CD4-positive, alpha-beta T cell (primary cell): ENCODE measurements at regions of chr11 and their contacts with region 1.

Region 1: DNA sequence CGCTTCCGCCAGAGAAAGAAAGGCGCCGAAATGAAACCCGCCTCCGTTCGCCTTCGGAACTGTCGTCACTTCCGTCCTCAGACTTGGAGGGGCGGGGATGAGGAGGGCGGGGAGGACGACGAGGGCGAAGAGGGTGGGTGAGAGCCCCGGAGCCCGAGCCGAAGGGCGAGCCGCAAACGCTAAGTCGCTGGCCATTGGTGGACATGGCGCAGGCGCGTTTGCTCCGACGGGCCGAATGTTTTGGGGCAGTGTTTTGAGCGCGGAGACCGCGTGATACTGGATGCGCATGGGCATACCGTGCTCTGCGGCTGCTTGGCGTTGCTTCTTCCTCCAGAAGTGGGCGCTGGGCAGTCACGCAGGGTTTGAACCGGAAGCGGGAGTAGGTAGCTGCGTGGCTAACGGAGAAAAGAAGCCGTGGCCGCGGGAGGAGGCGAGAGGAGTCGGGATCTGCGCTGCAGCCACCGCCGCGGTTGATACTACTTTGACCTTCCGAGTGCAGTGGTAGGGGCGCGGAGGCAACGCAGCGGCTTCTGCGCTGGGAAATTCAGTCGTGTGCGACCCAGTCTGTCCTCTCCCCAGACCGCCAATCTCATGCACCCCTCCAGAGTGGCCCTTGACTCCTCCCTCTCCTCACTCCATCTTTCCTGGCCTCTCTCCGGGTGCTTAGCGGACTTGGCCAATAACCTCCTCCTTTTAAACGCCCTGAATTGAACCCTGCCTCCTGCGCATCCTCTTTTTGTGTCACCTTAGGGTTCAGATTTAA is at the start of gene ATM:
- DNase-seq: peak; percentile 97 to 100 (median 98)
- ATAC-seq: peak; percentile 73
- H3K4me3 ChIP-seq: peak within 1 kb of the TSS; percentile 75
- H3K4me3 Mint-ChIP-seq: no peak within 1 kb of the TSS
- H3K27ac ChIP-seq: peak within 1 kb of the TSS; percentile 95 to 99
- H3K27ac Mint-ChIP-seq: no peak within 1 kb of the TSS
- H3K4me1 ChIP-seq: peaks cover 23% of the 10 kb centered on the region
- H3K4me1 Mint-ChIP-seq: peaks cover 50% of the 10 kb centered on the region
- H3K27me3 ChIP-seq: no peaks in the 10 kb centered on the region
- H3K27me3 Mint-ChIP-seq: no peaks in the 10 kb centered on the region
- CTCF ChIP-seq: peak; percentile 82
- total RNA-seq, gene ATM: 307 to 329 TPM

Region 2: DNA sequence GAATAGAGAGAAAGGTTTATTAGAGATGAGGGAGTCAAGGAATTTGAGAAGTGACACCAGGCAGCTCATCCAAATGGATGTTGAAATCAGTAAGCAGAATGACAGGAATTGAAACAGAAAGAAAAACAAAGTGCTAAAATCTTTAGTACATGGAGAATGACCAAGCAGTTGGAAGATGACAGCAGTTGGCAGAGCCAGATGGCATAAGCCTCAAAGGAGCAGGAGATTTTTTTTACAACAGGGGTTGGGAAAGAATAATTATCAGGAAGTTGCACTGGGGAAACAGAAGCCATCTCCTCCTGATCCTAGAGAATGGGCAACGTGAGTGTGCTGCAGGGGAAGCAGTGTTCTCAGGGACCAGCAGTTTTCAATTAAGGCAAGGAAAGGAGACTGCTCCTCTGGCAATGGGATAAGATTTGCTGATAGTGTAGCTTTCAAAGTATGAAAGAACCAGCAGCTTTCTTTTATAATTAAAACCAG is 265.7 kb before region 1 on chr11:
- CTCF ChIA-PET with region 1: no interaction called
- POLR2A ChIA-PET with region 1: no interaction called
- intact Hi-C with region 1: no loop called
- DNase-seq: peak in 3 of 14 experiments; percentile 11 to 13 (median 12)
- ATAC-seq: no peak
- H3K4me3 ChIP-seq: no peak overlapping the region
- H3K4me3 Mint-ChIP-seq: no peak overlapping the region
- H3K27ac ChIP-seq: no peak overlapping the region
- H3K27ac Mint-ChIP-seq: no peak overlapping the region
- H3K4me1 ChIP-seq: no peaks in the 10 kb centered on the region
- H3K4me1 Mint-ChIP-seq: no peaks in the 10 kb centered on the region
- H3K27me3 ChIP-seq: peaks cover 0 to 5% of the 10 kb centered on the region in 2 experiments
- H3K27me3 Mint-ChIP-seq: peaks cover 30% of the 10 kb centered on the region
- CTCF ChIP-seq: no peak

Region 3: DNA sequence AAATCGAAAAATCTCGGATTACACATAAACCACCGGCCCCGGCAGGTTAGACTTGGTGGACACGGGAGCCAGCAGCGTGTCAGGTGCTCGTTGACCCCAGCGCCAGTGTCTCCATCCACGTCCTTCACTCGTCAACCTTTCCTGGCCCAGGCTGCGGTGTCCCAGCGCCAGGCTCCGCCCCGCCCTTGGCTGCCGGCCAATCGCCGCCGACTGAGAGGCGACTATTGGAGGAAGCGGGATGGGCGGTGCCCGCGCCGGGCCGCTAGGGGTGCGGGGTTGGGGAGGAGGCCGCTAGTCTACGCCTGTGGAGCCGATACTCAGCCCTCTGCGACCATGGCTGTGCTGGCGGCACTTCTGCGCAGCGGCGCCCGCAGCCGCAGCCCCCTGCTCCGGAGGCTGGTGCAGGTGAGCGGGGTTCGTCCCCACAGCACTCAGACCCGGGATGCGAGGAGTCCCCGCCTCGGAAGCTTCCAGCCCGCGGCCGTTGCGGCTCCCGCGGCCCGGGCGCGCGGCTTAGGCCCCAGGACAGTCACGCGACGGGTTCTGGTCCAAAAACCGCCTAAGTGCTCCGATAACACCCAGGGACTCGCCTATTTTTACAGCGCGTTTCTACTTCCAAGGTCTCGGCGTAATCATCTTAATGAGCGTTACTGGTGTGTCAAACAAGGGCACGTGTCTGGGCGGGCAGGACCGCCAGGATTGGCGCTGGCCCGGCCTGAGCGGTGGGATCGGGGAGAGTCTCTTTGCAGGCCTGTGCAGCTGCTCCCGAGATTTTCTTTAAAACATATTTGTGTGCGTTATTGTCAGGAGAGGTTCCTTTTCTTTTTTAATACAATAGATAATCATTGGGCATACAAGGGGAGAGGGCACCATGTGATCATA is 101.4 kb before region 1 on chr11 and contains the start of gene ACAT1:
- CTCF ChIA-PET with region 1: no interaction called
- POLR2A ChIA-PET with region 1: interaction called, 5 read pairs
- intact Hi-C with region 1: loop called in 1 of 2 experiments (anchors 2 kb)
- DNase-seq: peak; percentile 91 to 98 (median 96)
- ATAC-seq: peak; percentile 98
- H3K4me3 ChIP-seq: peak within 1 kb of the TSS; percentile 84
- H3K4me3 Mint-ChIP-seq: peak within 1 kb of the TSS; percentile 89
- H3K27ac ChIP-seq: peak within 1 kb of the TSS in 1 of 2 donors; percentile 46
- H3K27ac Mint-ChIP-seq: peak within 1 kb of the TSS; percentile 53
- H3K4me1 ChIP-seq: peaks cover 40% of the 10 kb centered on the region
- H3K4me1 Mint-ChIP-seq: peaks cover 42% of the 10 kb centered on the region
- H3K27me3 ChIP-seq: no peaks in the 10 kb centered on the region
- H3K27me3 Mint-ChIP-seq: no peaks in the 10 kb centered on the region
- CTCF ChIP-seq: no peak
- total RNA-seq, gene ACAT1: 13.8 to 18.5 TPM

Region 4: GRCh38 chr11:108206969-108207682 is 15.7 kb before region 1 on chr11:
- CTCF ChIA-PET with region 1: no interaction called
- POLR2A ChIA-PET with region 1: interaction called, 10 read pairs
- intact Hi-C with region 1: no loop called
- DNase-seq: no peak
- ATAC-seq: no peak
- H3K4me3 ChIP-seq: no peak overlapping the region
- H3K4me3 Mint-ChIP-seq: no peak overlapping the region
- H3K27ac ChIP-seq: no peak overlapping the region
- H3K27ac Mint-ChIP-seq: no peak overlapping the region
- H3K4me1 ChIP-seq: peaks cover 33% of the 10 kb centered on the region
- H3K4me1 Mint-ChIP-seq: peaks cover 63% of the 10 kb centered on the region
- H3K27me3 ChIP-seq: no peaks in the 10 kb centered on the region
- H3K27me3 Mint-ChIP-seq: no peaks in the 10 kb centered on the region
- CTCF ChIP-seq: no peak

Region 5: GRCh38 chr11:108246885-108247284 is 24.0 kb after region 1 on chr11:
- CTCF ChIA-PET with region 1: interaction called, 23 read pairs
- POLR2A ChIA-PET with region 1: interaction called, 773 read pairs
- intact Hi-C with region 1: loop called in 1 of 2 experiments (anchors 2 kb)
- DNase-seq: no peak
- ATAC-seq: no peak
- H3K4me3 ChIP-seq: no peak overlapping the region
- H3K4me3 Mint-ChIP-seq: peak overlapping the region; percentile 38
- H3K27ac ChIP-seq: peak overlapping the region; percentile 9 to 35
- H3K27ac Mint-ChIP-seq: no peak overlapping the region
- H3K4me1 ChIP-seq: peaks cover 33% of the 10 kb centered on the region
- H3K4me1 Mint-ChIP-seq: peaks cover 86% of the 10 kb centered on the region
- H3K27me3 ChIP-seq: no peaks in the 10 kb centered on the region
- H3K27me3 Mint-ChIP-seq: no peaks in the 10 kb centered on the region
- CTCF ChIP-seq: no peak

Region 6: DNA sequence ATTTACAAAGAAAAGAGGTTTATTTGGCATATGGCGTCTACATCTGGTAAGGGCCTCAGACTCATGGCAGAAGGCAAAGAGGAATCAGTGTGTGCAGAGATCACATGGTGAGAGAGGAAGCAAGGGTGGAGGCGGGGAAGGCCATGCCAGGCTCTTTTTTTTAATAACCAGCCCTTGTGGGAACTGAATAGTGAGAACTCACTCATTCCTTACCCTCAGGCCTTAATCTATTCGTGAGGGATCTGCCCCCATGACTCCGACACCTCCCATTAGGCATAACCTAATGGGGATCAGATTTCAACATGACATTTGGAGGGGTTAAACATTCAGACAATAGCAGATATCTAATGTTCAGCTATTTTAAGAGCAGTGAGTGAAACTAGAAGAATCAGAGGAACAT is 55.7 kb after region 1 on chr11:
- CTCF ChIA-PET with region 1: interaction called, 3 read pairs
- POLR2A ChIA-PET with region 1: interaction called, 39 read pairs
- intact Hi-C with region 1: loop called in 1 of 2 experiments (anchors 5 kb)
- DNase-seq: peak in 2 of 14 experiments; percentile 10 to 21
- ATAC-seq: no peak
- H3K4me3 ChIP-seq: no peak overlapping the region
- H3K4me3 Mint-ChIP-seq: peak overlapping the region; percentile 3
- H3K27ac ChIP-seq: no peak overlapping the region
- H3K27ac Mint-ChIP-seq: peak overlapping the region; percentile 84
- H3K4me1 ChIP-seq: peaks cover 15% of the 10 kb centered on the region
- H3K4me1 Mint-ChIP-seq: peaks cover 80% of the 10 kb centered on the region
- H3K27me3 ChIP-seq: no peaks in the 10 kb centered on the region
- H3K27me3 Mint-ChIP-seq: no peaks in the 10 kb centered on the region
- CTCF ChIP-seq: no peak

Region 7: GRCh38 chr11:108467091-108467823 is 244.4 kb after region 1 on chr11 and contains the start of gene C11orf65:
- CTCF ChIA-PET with region 1: no interaction called
- POLR2A ChIA-PET with region 1: interaction called, 5 read pairs
- intact Hi-C with region 1: loop called (anchors 1 kb)
- DNase-seq: peak; percentile 92 to 98 (median 94)
- ATAC-seq: peak; percentile 94
- H3K4me3 ChIP-seq: peak within 1 kb of the TSS; percentile 73
- H3K4me3 Mint-ChIP-seq: peak within 1 kb of the TSS; percentile 95
- H3K27ac ChIP-seq: peak within 1 kb of the TSS; percentile 90 to 98
- H3K27ac Mint-ChIP-seq: peak within 1 kb of the TSS; percentile 99
- H3K4me1 ChIP-seq: peaks cover 12% of the 10 kb centered on the region
- H3K4me1 Mint-ChIP-seq: peaks cover 19% of the 10 kb centered on the region
- H3K27me3 ChIP-seq: no peaks in the 10 kb centered on the region
- H3K27me3 Mint-ChIP-seq: no peaks in the 10 kb centered on the region
- CTCF ChIP-seq: no peak
- total RNA-seq, gene C11orf65: 0.30 to 0.75 TPM

Region 8: DNA sequence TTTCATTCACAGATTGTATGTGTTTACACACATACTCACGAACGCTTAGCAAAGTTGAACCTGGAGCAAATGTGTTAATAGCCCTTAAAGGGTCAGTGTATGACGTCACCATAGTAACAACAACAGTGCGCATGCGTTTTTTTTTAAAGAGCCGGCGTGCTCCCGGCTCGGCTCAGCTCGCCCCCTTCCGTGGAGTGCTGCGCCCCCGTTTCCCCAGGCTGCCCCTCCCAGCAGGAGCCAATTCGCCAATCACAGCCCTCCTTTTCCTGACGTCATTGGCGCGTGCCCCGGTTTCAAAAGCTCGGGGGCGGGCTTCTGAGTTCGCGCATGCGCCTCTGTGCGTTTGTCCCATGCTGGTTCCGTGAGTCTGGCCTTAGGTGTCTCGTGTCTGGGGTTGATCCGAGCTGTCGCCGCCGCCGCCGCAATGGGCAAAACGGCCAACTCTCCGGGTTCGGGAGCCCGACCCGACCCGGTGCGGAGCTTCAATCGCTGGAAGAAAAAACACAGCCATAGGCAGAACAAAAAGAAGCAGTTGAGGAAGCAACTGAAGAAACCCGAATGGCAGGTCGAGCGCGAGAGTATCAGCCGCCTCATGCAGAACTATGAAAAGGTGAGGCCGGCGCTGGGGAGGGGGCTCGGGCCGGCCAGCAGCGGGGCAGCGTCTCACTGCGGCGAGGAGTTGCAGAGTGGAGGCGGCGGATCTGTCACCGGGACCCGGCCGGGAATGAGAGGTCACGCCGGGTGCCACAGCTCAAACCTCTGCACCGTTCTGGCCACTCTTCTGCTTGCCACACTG is 442.1 kb after region 1 on chr11 and contains the start of gene DDX10:
- CTCF ChIA-PET with region 1: no interaction called
- POLR2A ChIA-PET with region 1: interaction called, 9 read pairs
- intact Hi-C with region 1: loop called (anchors 5 to 10 kb)
- DNase-seq: peak; percentile 96 to 99 (median 98)
- ATAC-seq: peak; percentile 99
- H3K4me3 ChIP-seq: peak within 1 kb of the TSS; percentile 72
- H3K4me3 Mint-ChIP-seq: peak within 1 kb of the TSS; percentile 98
- H3K27ac ChIP-seq: peak within 1 kb of the TSS; percentile 32 to 55
- H3K27ac Mint-ChIP-seq: peak within 1 kb of the TSS; percentile 89
- H3K4me1 ChIP-seq: peaks cover 19% of the 10 kb centered on the region
- H3K4me1 Mint-ChIP-seq: peaks cover 42% of the 10 kb centered on the region
- H3K27me3 ChIP-seq: no peaks in the 10 kb centered on the region
- H3K27me3 Mint-ChIP-seq: no peaks in the 10 kb centered on the region
- CTCF ChIP-seq: no peak
- total RNA-seq, gene DDX10: 15.0 to 15.4 TPM